Ascending aorta (tissue), 2 donors: ENCODE measurements at regions of chr9 and their contacts with region 1.

Region 1: DNA sequence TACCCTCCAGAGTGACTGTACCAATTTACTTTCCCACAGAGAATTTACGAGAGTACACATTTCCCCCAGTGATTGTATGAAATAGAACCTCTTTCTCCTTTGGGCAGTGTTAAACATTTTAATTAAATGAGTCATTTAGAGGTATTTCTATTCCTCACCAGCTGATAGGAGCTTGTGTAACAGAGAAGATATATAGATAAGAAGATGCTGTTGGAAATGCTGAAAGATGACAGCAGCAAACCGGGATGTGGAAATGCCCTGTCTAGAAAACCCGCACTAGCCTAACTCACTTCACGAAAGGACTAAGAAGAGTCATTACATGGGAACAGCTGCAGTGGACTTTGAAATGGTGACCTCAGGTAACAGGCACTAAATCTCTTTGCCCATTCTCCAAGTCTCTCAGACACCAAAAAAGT is 68.3 kb downstream of the LPAR1 start:
- DNase-seq: no peak
- H3K4me3 ChIP-seq: no peak overlapping the region
- H3K27ac ChIP-seq: peak overlapping the region in 1 of 2 donors; percentile 12
- H3K4me1 ChIP-seq: no peaks in the 10 kb centered on the region
- H3K27me3 ChIP-seq: no peaks in the 10 kb centered on the region
- CTCF ChIP-seq: no peak

Region 2: GRCh38 chr9:111016426-111017045 is 46.6 kb after region 1 on chr9:
- intact Hi-C with region 1: loop called (anchors 5 kb)
- DNase-seq: no peak
- H3K4me3 ChIP-seq: no peak overlapping the region
- H3K27ac ChIP-seq: no peak overlapping the region
- H3K4me1 ChIP-seq: peaks cover 2 to 9% of the 10 kb centered on the region in 2 donors
- H3K27me3 ChIP-seq: no peaks in the 10 kb centered on the region
- CTCF ChIP-seq: no peak

Region 3: DNA sequence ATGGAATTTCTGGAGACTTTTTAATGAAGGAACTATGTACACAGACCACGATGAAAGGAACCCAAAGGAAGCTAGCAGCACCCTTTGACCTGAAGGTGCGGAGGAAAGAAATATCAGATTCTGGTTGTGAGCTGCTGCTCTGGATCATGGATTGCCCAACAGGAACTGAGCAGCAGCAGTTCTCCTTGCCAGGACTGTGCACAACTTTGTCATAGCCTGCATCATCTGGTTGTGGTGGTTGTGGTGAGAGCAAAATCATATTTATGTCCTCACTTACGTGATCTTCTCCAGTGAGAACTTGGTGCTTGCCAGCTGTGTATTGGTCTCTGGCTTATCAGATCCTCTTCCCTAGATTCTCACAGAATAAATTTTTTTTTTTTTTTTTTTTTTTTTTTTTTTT is 139.0 kb after region 1 on chr9:
- intact Hi-C with region 1: no loop called
- DNase-seq: no peak
- H3K4me3 ChIP-seq: no peak overlapping the region
- H3K27ac ChIP-seq: no peak overlapping the region
- H3K4me1 ChIP-seq: no peaks in the 10 kb centered on the region
- H3K27me3 ChIP-seq: no peaks in the 10 kb centered on the region
- CTCF ChIP-seq: no peak

Region 4: GRCh38 chr9:111548623-111549022 is 578.6 kb after region 1 on chr9:
- intact Hi-C with region 1: no loop called
- DNase-seq: no peak
- H3K4me3 ChIP-seq: no peak overlapping the region
- H3K27ac ChIP-seq: no peak overlapping the region
- H3K4me1 ChIP-seq: no peaks in the 10 kb centered on the region
- H3K27me3 ChIP-seq: no peaks in the 10 kb centered on the region
- CTCF ChIP-seq: no peak